Dorsolateral prefrontal cortex (tissue), 120 donors: ENCODE measurements at regions of chr11 and their contacts with region 1.

Region 1: DNA sequence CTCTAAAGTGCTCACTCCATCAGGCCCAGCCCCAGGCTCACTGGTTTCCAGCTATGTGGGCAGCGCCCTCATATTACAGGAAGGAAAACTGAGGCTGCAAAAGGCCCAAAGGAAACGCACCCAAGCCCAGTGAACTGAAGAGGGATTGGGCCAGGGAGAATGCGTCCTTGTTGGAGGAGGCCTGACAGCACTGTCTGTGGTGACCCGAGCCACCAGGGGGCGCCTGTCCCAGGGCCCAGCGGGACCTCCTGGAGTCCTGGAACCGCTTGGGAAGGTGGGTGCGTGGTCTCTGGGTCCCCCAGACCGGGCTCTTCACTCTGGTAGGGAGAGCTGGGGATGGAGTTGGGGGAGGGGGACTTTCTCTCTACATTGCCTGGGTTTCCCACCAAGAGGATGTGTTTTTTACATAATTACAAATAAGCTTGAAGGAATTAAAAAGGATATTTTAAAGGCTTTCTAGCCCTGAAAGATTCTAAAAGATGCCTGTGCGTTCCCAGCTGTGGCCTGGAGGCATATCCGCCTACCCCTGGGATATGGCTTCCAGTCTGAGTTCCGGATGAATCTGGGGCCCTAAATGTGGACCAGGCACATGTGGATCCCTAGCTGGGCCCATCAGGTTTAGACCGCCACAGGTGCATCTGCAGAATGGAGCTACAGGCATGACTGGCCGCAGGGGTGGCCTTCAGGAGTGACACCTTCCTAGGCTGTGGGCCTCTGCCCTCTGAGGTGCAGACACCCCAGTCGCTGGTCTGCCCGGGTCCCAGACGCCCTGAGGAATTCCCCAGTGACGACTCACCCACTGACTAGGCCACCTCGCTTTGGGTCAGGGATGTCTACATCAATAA is 4.2 kb downstream of the SPI1 start:
- DNase-seq: peak; percentile 69 to 84 (median 76)
- H3K4me3 ChIP-seq: peak overlapping the region in 5 of 59 donors; percentile 3 to 52 (median 7)
- H3K27ac ChIP-seq: peak overlapping the region in 10 of 59 donors; percentile 2 to 61 (median 18)
- H3K27me3 ChIP-seq: no peaks in the 10 kb centered on the region
- CTCF ChIP-seq: peak; percentile 72 to 97 (median 90)

Region 2: GRCh38 chr11:47355283-47356128 is 18.6 kb before region 1 on chr11:
- intact Hi-C with region 1: no loop called
- DNase-seq: peak; percentile 88 to 94 (median 92)
- H3K4me3 ChIP-seq: peak overlapping the region; percentile 49 to 80 (median 65)
- H3K27ac ChIP-seq: peak overlapping the region in 40 of 59 donors; percentile 16 to 83 (median 62)
- H3K27me3 ChIP-seq: no peaks in the 10 kb centered on the region
- CTCF ChIP-seq: peak; percentile 36 to 98 (median 90)

Region 3: DNA sequence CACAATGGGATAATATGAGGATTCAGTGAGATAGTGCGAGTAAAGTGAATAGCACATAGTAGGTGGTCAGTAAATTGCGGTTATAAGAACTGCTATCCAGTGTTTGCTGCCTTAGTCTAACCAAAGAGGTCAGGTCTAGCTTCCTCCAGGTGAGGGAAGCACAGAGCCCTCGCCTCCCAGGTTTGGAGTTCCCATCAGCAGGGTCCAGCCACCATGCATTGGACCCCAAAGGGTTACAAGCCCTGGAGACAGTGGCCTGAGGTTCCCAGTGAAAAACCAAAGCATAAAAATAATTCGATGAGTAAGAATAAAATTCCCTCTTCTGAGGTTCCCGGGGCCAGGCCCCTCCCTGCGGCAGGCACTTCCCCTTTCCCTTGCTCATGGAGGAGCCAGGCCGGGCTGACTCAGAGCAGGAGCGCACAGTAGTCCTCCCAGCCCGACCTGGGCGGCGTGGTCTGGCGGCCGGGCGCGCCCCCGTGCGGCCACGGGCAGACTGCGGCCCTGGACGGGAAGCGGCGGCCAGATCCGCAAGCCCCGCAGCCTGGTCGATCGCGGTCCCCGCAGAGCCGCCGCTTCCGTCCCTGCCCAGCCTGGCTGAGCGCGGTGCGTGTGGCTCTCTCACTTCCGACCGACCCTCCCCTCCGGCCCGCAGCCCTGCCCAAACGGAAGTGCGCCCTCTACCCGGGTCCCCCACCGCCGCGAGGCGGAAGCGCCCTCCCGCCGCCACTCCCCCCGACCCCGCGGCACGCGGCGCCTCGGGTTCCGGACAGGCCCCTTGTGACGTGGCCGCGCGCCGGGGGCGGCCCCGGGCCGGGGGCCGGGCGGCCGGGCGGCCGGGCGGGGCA is 33.9 kb after region 1 on chr11 and contains the start of gene SLC39A13:
- intact Hi-C with region 1: loop called in 1 of 2 experiments (anchors 5 kb)
- DNase-seq: peak; percentile 81 to 97 (median 92)
- H3K4me3 ChIP-seq: peak within 1 kb of the TSS; percentile 59 to 92 (median 80)
- H3K27ac ChIP-seq: peak within 1 kb of the TSS; percentile 83 to 99 (median 96)
- H3K27me3 ChIP-seq: no peaks in the 10 kb centered on the region
- CTCF ChIP-seq: peak; percentile 66 to 98 (median 86)
- total RNA-seq, gene SLC39A13: 29.5 to 62.3 (median 39.7) TPM

Region 4: GRCh38 chr11:47454180-47454644 is 80.1 kb after region 1 on chr11:
- intact Hi-C with region 1: loop called in 1 of 2 experiments (anchors 1 kb)
- DNase-seq: peak in 8 of 10 donors; percentile 56 to 82 (median 72)
- H3K4me3 ChIP-seq: peak overlapping the region in 25 of 59 donors; percentile 11 to 50 (median 32)
- H3K27ac ChIP-seq: no peak overlapping the region
- H3K27me3 ChIP-seq: no peaks in the 10 kb centered on the region
- CTCF ChIP-seq: peak; percentile 40 to 85 (median 77)